ENCODE measurements at regions of chr16 and their contacts with region 1.

Region 1: DNA sequence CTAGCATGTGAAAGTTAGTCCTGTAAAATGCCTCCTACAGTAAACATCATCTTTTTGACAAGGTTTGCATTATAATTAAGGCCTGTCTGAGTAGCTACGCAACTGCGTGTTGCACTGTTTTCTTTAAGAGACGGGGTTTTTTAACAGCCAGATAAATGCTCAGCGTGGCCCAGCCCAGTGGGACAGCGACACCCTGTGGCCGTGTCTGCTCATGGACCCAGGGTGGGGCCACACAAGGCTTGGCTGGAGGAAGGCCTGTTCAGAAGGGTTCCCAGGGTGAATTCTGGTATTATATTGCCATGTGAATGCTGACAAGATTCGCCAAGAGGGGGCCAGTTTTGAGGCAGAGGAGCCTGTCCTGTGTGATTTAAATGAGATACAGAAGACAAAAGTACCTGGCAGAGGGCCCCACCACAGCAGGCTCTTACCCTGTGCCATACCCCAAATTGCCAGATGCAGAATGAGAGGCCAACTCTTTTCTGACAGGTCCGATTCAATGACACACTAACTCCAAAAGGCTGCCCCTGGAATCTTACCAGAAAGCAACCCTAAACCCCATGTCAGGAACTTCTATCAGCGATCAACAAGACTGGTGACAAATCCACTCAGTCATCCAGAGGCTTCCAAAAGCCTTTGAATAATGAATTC is 65.9 kb upstream of the IRX6 start:
- DNase-seq: peak; percentile 64
- ATAC-seq: peak; percentile 64 to 70

Region 2: GRCh38 chr16:53892155-53892554 is 1365.9 kb before region 1 on chr16:
- intact Hi-C with region 1: loop called in 1 of 2 experiments (anchors 10 kb)
- DNase-seq: peak; percentile 30
- ATAC-seq: peak; percentile 71 to 75

Measured in left cardiac atrium (tissue), 4 donors.